ENCODE measurements at regions of chr12 and their contacts with region 1.

Region 1: GRCh38 chr12:86838711-86839110 is 582.5 kb upstream of the MGAT4C start:
- DNase-seq: no peak
- ATAC-seq: no peak
- H3K4me3 ChIP-seq: no peak overlapping the region
- H3K27ac ChIP-seq: no peak overlapping the region
- H3K4me1 ChIP-seq: no peaks in the 10 kb centered on the region
- H3K27me3 ChIP-seq: no peaks in the 10 kb centered on the region
- CTCF ChIP-seq: no peak
- EP300 ChIP-seq: no peak
- POLR2A ChIP-seq: no peak
- RAD21 ChIP-seq: no peak

Region 2: GRCh38 chr12:86860776-86861175 is 22.1 kb after region 1 on chr12:
- CTCF ChIA-PET with region 1: no interaction called
- POLR2A ChIA-PET with region 1: no interaction called
- RAD21 ChIA-PET with region 1: no interaction called
- SMC1A ChIA-PET with region 1: no interaction called
- in situ Hi-C with region 1: no loop called
- intact Hi-C with region 1: loop called (anchors 1 kb)
- DNase-seq: no peak
- ATAC-seq: no peak
- H3K4me3 ChIP-seq: no peak overlapping the region
- H3K27ac ChIP-seq: no peak overlapping the region
- H3K4me1 ChIP-seq: no peaks in the 10 kb centered on the region
- H3K27me3 ChIP-seq: no peaks in the 10 kb centered on the region
- CTCF ChIP-seq: no peak
- EP300 ChIP-seq: no peak
- POLR2A ChIP-seq: no peak
- RAD21 ChIP-seq: no peak

Measured in GM12878 (cell line).